PC-9 (cell line): ENCODE measurements at regions of chr1 and their contacts with region 1.

Region 1: GRCh38 chr1:154906621-154907081 is 29.9 kb downstream of the PMVK start:
- DNase-seq: peak in 1 of 2 experiments; percentile 6
- H3K4me3 ChIP-seq: no peak overlapping the region
- H3K27ac ChIP-seq: no peak overlapping the region
- H3K4me1 ChIP-seq: no peaks in the 10 kb centered on the region
- H3K27me3 ChIP-seq: peaks cover 36% of the 10 kb centered on the region
- CTCF ChIP-seq: peak; percentile 60

Region 2: DNA sequence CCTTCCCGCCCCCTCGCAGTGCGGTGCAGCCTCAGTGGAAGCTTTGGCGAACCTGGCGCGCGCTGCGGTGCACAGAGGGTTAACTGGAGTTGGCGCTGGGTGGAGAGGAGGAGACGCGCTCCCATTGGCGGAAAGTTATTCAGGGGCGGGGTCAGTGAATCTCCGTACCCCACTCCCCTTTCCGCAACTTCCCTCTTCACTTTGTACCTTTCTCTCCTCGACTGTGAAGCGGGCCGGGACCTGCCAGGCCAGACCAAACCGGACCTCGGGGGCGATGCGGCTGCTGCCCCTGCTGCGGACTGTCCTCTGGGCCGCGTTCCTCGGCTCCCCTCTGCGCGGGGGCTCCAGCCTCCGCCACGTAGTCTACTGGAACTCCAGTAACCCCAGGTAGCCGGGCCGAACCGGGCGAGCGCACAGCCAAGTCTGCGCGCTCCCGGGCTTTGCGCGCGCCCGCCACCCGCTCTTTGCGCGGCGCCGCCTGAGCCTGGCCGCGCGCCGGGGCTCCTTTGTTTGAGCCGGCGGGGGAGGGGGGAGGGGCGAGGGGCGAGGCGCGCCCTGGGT is 157.0 kb after region 1 on chr1 and contains the start of gene EFNA4:
- CTCF ChIA-PET with region 1: no interaction called
- POLR2A ChIA-PET with region 1: no interaction called
- intact Hi-C with region 1: loop called (anchors 1 kb)
- DNase-seq: peak; percentile 79 to 82
- H3K4me3 ChIP-seq: peak within 1 kb of the TSS; percentile 74
- H3K27ac ChIP-seq: no peak within 1 kb of the TSS
- H3K4me1 ChIP-seq: peaks cover 10% of the 10 kb centered on the region
- H3K27me3 ChIP-seq: no peaks in the 10 kb centered on the region
- CTCF ChIP-seq: no peak
- total RNA-seq, gene EFNA4: 14.0 and 17.3 TPM in 2 replicates

Region 3: DNA sequence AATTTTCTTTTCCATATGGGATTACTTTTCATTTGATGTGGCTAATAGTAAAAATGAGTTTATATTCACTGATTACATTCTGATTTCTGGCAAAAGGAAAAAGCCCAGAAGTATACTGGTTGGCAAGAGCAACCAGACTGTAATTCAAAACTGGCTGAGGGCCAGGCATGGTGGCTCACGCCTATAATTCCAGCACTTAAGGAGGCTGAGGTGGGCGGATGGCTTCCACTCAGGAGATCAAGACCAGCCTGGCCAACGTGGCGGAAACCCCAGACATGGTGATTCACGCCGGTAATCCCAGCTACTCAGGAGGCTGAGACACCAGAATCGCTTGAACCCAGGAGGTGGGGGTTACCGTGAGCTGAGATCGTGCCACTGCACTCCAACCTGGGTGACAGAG is 967.2 kb after region 1 on chr1:
- CTCF ChIA-PET with region 1: no interaction called
- POLR2A ChIA-PET with region 1: no interaction called
- intact Hi-C with region 1: no loop called
- DNase-seq: no peak
- H3K4me3 ChIP-seq: no peak overlapping the region
- H3K27ac ChIP-seq: no peak overlapping the region
- H3K4me1 ChIP-seq: no peaks in the 10 kb centered on the region
- H3K27me3 ChIP-seq: no peaks in the 10 kb centered on the region
- CTCF ChIP-seq: no peak